ENCODE measurements at regions of chr17 and their contacts with region 1.

Region 1: DNA sequence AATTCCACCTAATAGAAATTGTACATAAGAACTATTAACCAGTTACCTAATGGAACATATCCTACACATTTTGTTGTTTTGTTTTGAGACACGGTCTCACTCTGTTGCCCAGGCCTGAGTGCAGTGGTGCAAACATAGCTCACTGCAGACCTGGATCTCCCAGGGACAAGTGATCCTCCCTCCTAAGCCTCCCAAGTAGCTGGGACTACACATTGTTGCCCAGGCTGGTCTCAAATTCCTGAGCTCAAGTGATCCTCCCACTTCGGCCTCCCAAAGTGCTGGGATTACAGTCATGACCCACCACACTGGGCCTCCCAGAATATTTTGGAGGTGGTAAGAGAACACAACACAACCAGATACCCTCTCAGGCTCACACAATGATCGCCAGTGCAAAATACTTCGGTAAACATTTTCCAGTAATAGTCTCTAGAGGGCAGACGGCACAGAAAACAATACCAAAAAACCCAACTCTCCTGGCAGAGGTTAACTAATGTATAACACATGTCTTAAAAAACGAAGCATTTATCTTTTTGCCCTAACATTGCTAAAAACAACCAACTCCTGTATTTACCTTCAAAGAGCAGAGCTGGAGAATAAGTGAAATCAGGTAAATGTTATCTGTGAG is 10.6 kb downstream of the NUFIP2 start:
- DNase-seq: no peak
- H3K4me3 ChIP-seq: no peak overlapping the region
- H3K27ac ChIP-seq: no peak overlapping the region
- H3K4me1 ChIP-seq: no peaks in the 10 kb centered on the region
- H3K27me3 ChIP-seq: no peaks in the 10 kb centered on the region
- CTCF ChIP-seq: no peak

Region 2: DNA sequence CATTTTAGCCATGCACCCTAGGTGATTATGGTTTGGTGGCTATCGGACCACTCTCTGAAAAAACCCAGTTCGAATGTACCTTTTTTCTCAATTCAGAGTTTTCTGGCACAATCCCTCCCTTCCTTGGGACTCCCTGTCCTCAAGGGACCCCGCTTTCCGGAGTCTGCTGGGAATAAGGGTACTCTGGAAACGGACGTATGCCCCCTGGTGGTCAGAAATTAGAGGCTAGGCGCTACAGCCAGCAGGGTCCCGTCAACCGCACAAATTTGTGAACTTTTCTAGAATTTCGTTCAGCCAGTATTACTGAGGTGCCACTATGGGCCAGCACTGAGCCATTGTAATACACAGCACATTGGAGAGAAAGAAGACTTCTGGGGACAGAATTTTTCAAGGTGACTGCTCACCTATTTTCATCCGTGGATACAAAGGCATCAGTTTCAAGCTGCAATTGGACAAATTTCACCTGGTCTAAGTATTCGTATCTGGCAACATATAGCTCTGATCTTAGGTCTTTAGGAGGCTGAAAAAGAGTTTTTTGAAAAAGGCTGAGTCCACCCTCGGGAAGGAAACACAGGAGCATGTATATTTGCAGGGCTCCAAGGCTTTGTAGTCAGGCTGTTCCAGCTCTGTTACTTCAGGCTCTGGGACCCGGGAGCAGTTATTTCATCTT is 63.9 kb before region 1 on chr17:
- intact Hi-C with region 1: loop called (anchors 10 kb)
- DNase-seq: peak; percentile 79
- H3K4me3 ChIP-seq: no peak overlapping the region
- H3K27ac ChIP-seq: no peak overlapping the region
- H3K4me1 ChIP-seq: no peaks in the 10 kb centered on the region
- H3K27me3 ChIP-seq: no peaks in the 10 kb centered on the region
- CTCF ChIP-seq: peak; percentile 82

Measured in colonic mucosa (tissue), 4 donors.